Activated naive CD4-positive, alpha-beta T cell treated with anti-CD3 and anti-CD28 coated beads for 36 hours (primary cell): ENCODE measurements at regions of chr1 and their contacts with region 1.

Region 1: GRCh38 chr1:8848663-8849386 is 29.7 kb downstream of the ENO1 start:
- DNase-seq: peak; percentile 82
- H3K4me3 Mint-ChIP-seq: no peak overlapping the region
- H3K27ac Mint-ChIP-seq: no peak overlapping the region
- H3K4me1 Mint-ChIP-seq: peaks cover 4% of the 10 kb centered on the region
- H3K27me3 Mint-ChIP-seq: no peaks in the 10 kb centered on the region

Region 2: DNA sequence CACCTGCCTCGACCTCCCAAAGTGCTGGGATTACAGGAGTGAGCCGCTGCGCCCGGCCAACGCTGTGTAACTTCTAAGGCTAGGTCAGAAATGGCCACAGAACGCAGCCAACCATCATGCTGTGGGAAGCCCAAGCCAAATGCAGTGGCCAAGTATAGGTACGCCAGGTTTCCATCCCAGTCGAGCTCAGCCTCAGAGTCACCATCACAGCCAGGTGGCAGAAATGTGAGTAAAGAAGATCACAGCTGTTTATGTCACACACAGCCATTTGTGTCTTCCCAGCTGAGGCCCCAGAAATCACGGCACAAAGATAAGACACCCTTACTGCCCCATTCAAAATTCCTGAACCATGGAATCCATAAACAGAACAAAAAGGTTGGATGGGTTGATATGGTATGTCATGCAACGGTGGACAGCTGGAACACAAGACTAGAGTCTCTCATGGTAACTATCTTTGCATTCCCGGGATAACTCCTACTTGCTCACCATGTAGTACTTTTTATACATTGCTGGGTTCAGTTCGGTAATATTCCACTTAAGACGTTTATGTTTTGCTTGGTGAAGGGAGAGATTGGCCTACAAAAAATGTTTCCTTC is 446.6 kb before region 1 on chr1:
- CTCF ChIA-PET with region 1: no interaction called
- intact Hi-C with region 1: no loop called
- DNase-seq: no peak
- H3K4me3 Mint-ChIP-seq: no peak overlapping the region
- H3K27ac Mint-ChIP-seq: no peak overlapping the region
- H3K4me1 Mint-ChIP-seq: peaks cover 40% of the 10 kb centered on the region
- H3K27me3 Mint-ChIP-seq: no peaks in the 10 kb centered on the region

Region 3: DNA sequence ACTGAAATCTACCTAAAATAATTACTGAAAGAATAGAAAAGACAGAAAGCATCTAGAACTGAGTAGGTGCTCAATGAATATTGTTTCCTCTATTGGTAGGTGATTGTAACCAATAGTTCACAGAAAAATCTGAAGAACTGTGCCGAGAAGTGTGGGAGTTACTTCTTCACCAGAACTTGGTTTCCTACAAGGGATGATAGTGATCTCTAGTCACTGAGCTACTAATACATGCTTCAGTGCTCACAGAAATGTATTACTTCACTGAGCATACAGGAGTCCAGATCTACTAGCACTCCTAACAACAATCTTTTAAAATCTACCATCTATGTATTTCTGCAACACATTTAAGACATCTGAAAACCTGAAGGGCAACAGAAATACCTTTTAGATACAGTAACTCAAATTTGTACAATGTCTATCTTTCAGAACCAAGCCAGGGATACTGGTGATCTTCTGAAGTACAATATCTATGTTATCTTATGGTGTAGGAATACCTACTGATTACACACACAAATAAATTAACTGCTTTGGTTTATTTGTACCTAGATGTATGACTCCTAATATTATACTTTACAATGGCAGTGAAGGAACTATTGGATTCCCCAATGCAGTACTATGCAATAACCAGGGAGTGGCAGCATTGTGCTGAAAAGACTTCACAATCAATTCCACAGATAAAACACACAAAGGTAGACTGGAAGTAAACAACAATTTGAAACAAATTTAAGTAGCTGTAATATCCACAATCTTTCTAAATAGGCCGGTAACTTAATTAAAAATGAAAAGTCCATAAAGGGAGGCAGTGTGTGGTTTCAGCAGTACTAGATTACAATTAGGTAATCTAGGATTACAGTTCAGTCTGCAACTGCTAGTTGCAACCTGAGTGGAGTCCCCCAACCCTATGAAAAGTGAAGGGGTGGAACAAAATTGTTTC is 287.9 kb before region 1 on chr1:
- CTCF ChIA-PET with region 1: interaction called, 19 read pairs
- intact Hi-C with region 1: loop called (anchors 1 kb)
- DNase-seq: peak; percentile 53
- H3K4me3 Mint-ChIP-seq: no peak overlapping the region
- H3K27ac Mint-ChIP-seq: no peak overlapping the region
- H3K4me1 Mint-ChIP-seq: peaks cover 26% of the 10 kb centered on the region
- H3K27me3 Mint-ChIP-seq: no peaks in the 10 kb centered on the region

Region 4: GRCh38 chr1:8727809-8728213 is 121.0 kb before region 1 on chr1:
- CTCF ChIA-PET with region 1: interaction called, 35 read pairs
- intact Hi-C with region 1: no loop called
- DNase-seq: no peak
- H3K4me3 Mint-ChIP-seq: no peak overlapping the region
- H3K27ac Mint-ChIP-seq: no peak overlapping the region
- H3K4me1 Mint-ChIP-seq: peaks cover 15% of the 10 kb centered on the region
- H3K27me3 Mint-ChIP-seq: no peaks in the 10 kb centered on the region

Region 5: GRCh38 chr1:8825985-8826481 is 22.8 kb before region 1 on chr1:
- CTCF ChIA-PET with region 1: interaction called, 10 read pairs
- intact Hi-C with region 1: no loop called
- DNase-seq: no peak
- H3K4me3 Mint-ChIP-seq: no peak overlapping the region
- H3K27ac Mint-ChIP-seq: no peak overlapping the region
- H3K4me1 Mint-ChIP-seq: peaks cover 12% of the 10 kb centered on the region
- H3K27me3 Mint-ChIP-seq: no peaks in the 10 kb centered on the region

Region 6: GRCh38 chr1:8858888-8859706 is 10.3 kb after region 1 on chr1:
- CTCF ChIA-PET with region 1: interaction called, 101 read pairs
- intact Hi-C with region 1: no loop called
- DNase-seq: peak; percentile 78
- H3K4me3 Mint-ChIP-seq: no peak overlapping the region
- H3K27ac Mint-ChIP-seq: peak overlapping the region; percentile 83
- H3K4me1 Mint-ChIP-seq: peaks cover 25% of the 10 kb centered on the region
- H3K27me3 Mint-ChIP-seq: no peaks in the 10 kb centered on the region